ENCODE measurements at regions of chr2 and their contacts with region 1.

Region 1: DNA sequence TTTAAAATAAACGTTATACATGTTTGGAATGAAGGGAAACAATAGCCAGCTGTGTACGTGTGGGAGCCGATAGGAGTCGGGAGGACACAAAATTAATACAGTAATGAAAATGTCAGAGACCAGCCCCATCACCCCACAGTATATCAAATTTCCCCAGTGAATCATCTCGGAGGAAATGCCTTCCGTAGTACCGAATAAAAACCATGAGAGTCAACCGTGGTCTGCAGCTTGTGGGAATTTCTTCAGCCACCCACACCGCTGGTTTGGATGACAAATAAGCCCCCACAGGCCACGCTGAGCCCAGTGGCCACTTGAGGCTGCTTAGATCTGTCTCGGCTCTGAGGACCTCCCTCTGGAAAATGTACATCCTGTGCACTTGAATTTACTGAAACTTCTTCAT is 133.7 kb downstream of the COL6A3 start:
- DNase-seq: peak; percentile 99
- ATAC-seq: peak; percentile 73
- H3K4me3 ChIP-seq: no peak overlapping the region
- H3K27ac ChIP-seq: peak overlapping the region; percentile 98
- H3K4me1 ChIP-seq: peaks cover 36% of the 10 kb centered on the region
- H3K27me3 ChIP-seq: no peaks in the 10 kb centered on the region
- CTCF ChIP-seq: 0 out of 2 replicates have a peak, but pooled peaks have one; percentile 16
- POLR2A ChIP-seq: peak; percentile 89
- RAD21 ChIP-seq: peak; percentile 45

Region 2: GRCh38 chr2:236107942-236108625 is 1172.1 kb before region 1 on chr2:
- CTCF ChIA-PET with region 1: no interaction called
- POLR2A ChIA-PET with region 1: no interaction called
- dilution Hi-C with region 1: no loop called
- in situ Hi-C with region 1: no loop called
- intact Hi-C with region 1: no loop called
- DNase-seq: no peak
- ATAC-seq: no peak
- H3K4me3 ChIP-seq: no peak overlapping the region
- H3K27ac ChIP-seq: no peak overlapping the region
- H3K4me1 ChIP-seq: no peaks in the 10 kb centered on the region
- H3K27me3 ChIP-seq: no peaks in the 10 kb centered on the region
- CTCF ChIP-seq: no peak
- POLR2A ChIP-seq: no peak
- RAD21 ChIP-seq: no peak

Region 3: DNA sequence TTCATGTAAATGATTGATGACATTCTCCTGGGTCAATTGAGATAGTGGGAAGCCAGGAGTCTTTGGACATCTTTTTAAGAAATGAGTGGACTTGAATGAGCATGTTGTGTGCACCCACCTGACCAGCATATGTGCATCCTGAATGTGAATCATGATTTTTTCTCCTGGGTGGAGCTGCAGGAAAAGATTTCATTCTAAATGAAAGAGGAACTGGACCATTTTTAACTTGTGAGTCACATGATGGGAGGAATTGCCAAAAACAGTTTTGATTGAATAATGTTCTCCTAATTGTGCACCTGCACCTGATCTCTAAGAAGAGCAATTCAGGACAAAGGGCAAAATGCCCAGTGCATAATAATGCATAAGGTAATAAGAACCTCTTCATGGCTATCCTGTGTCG is 162.2 kb before region 1 on chr2:
- CTCF ChIA-PET with region 1: no interaction called
- POLR2A ChIA-PET with region 1: no interaction called
- dilution Hi-C with region 1: no loop called
- in situ Hi-C with region 1: no loop called
- intact Hi-C with region 1: no loop called
- DNase-seq: peak; percentile 62
- ATAC-seq: no peak
- H3K4me3 ChIP-seq: no peak overlapping the region
- H3K27ac ChIP-seq: no peak overlapping the region
- H3K4me1 ChIP-seq: peaks cover 7% of the 10 kb centered on the region
- H3K27me3 ChIP-seq: no peaks in the 10 kb centered on the region
- CTCF ChIP-seq: no peak
- POLR2A ChIP-seq: no peak
- RAD21 ChIP-seq: no peak

Region 4: DNA sequence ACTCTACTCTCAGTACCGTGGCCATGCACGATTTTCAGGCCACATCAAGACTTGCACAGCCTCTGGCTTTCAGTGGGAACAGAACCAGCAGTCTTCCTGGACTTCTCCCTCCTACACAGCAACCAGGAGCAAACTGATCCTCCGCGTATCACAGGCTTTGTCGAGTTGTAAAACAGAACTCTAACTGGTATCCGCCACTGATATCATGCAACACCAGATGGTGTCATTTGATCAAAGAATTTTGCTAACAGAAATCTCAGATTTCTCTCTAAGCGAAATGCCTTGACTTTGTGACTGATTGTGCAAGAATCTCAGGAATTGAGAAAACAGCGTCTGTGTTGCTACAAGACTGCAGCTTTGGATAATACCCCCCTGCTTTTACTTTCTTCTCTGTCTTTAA is 108.8 kb before region 1 on chr2:
- CTCF ChIA-PET with region 1: interaction called, 3 read pairs
- POLR2A ChIA-PET with region 1: no interaction called
- dilution Hi-C with region 1: no loop called
- in situ Hi-C with region 1: no loop called
- intact Hi-C with region 1: loop called (anchors 2 kb)
- DNase-seq: peak; percentile 97
- ATAC-seq: peak; percentile 92
- H3K4me3 ChIP-seq: peak overlapping the region; percentile 21; the same call in 1 of the 2 replicates
- H3K27ac ChIP-seq: peak overlapping the region; percentile 97
- H3K4me1 ChIP-seq: peaks cover 11% of the 10 kb centered on the region
- H3K27me3 ChIP-seq: no peaks in the 10 kb centered on the region
- CTCF ChIP-seq: peak; percentile 56
- POLR2A ChIP-seq: peak; percentile 42; the same call in 1 of the 2 replicates
- RAD21 ChIP-seq: peak; percentile 80

Region 5: DNA sequence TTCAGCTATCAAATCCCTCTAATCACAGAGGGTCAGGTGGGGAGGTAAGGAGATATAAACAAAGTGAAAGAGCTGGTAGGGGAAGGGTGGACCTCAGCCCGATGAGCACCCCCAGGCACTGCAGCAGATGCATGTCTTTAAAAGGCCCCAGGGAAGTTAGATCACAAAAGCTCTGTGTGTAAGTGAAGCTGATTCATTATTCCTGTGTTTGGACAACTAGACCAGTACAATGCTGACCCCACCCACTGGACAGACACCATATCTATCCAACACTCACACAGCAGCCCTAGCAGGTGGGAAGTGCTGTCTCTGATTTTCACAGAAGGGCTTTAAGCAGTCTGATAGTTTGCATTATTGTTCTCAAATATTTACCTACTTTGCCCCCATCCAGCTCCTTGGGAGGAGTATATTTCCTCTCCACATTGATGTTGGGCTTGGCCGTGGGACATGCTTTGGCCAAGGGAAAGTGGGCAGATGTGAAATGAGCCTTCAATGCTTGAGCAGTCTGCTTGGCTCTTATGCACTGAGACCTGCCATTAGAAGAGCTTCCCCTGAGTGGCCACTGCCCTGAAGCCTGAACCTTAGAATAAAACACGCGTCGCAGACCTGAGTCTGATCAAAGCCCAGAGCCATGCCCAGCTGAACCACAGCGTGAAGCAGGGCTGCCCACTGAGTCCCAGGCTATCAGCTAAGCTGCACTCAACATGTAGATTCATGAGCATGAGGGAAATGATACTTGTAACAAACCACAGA is 83.2 kb before region 1 on chr2:
- CTCF ChIA-PET with region 1: no interaction called
- POLR2A ChIA-PET with region 1: interaction called, 11 read pairs
- dilution Hi-C with region 1: no loop called
- in situ Hi-C with region 1: no loop called
- intact Hi-C with region 1: no loop called
- DNase-seq: peak; percentile 96
- ATAC-seq: peak; percentile 68
- H3K4me3 ChIP-seq: no peak overlapping the region
- H3K27ac ChIP-seq: peak overlapping the region; percentile 98
- H3K4me1 ChIP-seq: peaks cover 49% of the 10 kb centered on the region
- H3K27me3 ChIP-seq: no peaks in the 10 kb centered on the region
- CTCF ChIP-seq: no peak
- POLR2A ChIP-seq: peak; percentile 24; the same call in 1 of the 2 replicates
- RAD21 ChIP-seq: peak; percentile 18; the same call in 1 of the 2 replicates

Region 6: DNA sequence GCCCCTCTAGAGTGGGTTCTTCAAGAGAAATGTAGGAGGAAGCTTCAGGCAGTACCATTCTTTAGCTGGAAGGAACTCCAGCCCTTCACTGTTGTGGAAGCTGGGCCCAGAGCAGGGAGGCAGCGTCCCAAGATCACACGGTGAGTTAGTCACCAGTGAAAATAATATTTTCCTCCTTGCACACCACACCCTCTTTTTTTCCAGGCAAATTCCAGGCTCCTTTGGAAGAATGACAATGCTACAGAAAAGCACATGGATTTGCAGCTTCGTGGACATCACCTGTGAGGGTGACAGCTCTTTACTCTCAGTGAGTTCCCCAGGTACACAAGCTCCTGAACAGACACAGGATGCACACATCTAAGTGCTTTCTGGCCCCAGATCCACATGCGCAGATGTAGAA is 23.3 kb before region 1 on chr2:
- CTCF ChIA-PET with region 1: interaction called, 5 read pairs
- POLR2A ChIA-PET with region 1: interaction called, 8 read pairs
- dilution Hi-C with region 1: no loop called
- in situ Hi-C with region 1: no loop called
- intact Hi-C with region 1: loop called (anchors 2 kb)
- DNase-seq: peak; percentile 86
- ATAC-seq: peak; percentile 48
- H3K4me3 ChIP-seq: no peak overlapping the region
- H3K27ac ChIP-seq: peak overlapping the region; percentile 95
- H3K4me1 ChIP-seq: peaks cover 43% of the 10 kb centered on the region
- H3K27me3 ChIP-seq: no peaks in the 10 kb centered on the region
- CTCF ChIP-seq: no peak
- POLR2A ChIP-seq: 0 out of 2 replicates have a peak, but pooled peaks have one; percentile 21
- RAD21 ChIP-seq: no peak

Region 7: GRCh38 chr2:237315170-237315828 is 35.1 kb after region 1 on chr2:
- CTCF ChIA-PET with region 1: no interaction called
- POLR2A ChIA-PET with region 1: interaction called, 23 read pairs
- dilution Hi-C with region 1: no loop called
- in situ Hi-C with region 1: no loop called
- intact Hi-C with region 1: loop called (anchors 2 kb)
- DNase-seq: peak; percentile 98
- ATAC-seq: peak; percentile 69
- H3K4me3 ChIP-seq: no peak overlapping the region
- H3K27ac ChIP-seq: peak overlapping the region; percentile 95
- H3K4me1 ChIP-seq: peaks cover 26% of the 10 kb centered on the region
- H3K27me3 ChIP-seq: no peaks in the 10 kb centered on the region
- CTCF ChIP-seq: peak; percentile 45
- POLR2A ChIP-seq: 0 out of 2 replicates have a peak, but pooled peaks have one; percentile 23
- RAD21 ChIP-seq: peak; percentile 56

Measured in IMR-90 (cell line).